HepG2 (cell line): ENCODE measurements at regions of chr1 and their contacts with region 1.

Region 1: DNA sequence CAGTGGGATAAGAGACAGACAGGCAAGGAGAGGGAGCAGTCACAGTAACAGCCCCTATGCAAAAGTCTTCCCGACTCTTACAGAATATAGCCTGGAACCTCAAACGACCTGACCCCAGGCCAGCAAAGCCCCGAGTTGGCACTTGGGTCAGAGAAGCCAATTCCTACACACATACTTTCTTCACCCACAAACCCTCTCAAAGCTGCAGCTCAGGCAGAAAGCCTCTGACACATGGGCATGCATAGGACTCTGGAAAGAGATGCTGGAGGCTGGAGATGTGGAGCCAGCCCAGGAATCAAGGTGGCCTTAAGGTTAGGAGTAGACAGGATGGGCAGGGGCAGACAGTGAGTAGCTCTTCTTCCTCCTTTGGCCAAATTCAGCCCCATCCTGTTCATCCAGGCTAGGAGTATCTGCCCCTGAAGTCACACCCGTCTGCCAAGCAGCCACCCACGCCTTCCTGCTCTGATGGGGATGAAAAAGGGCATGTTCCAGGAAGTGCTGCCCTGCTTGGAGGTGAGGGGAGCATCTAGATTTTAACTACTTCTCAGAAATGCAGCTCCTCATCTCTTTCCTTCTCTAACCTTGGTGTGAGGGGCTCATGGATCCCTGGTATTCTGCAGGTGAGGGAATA is 7.8 kb downstream of the SLC41A1 start:
- DNase-seq: no peak
- ATAC-seq: no peak
- H3K4me3 ChIP-seq: no peak overlapping the region
- H3K27ac ChIP-seq: no peak overlapping the region
- H3K4me1 ChIP-seq: peaks cover 7% of the 10 kb centered on the region
- H3K27me3 ChIP-seq: peaks cover 0 to 4% of the 10 kb centered on the region in 2 experiments; a peak in 2 of 5 replicates
- CTCF ChIP-seq: no peak
- EP300 ChIP-seq: no peak
- POLR2A ChIP-seq: no peak
- RAD21 ChIP-seq: no peak

Region 2: DNA sequence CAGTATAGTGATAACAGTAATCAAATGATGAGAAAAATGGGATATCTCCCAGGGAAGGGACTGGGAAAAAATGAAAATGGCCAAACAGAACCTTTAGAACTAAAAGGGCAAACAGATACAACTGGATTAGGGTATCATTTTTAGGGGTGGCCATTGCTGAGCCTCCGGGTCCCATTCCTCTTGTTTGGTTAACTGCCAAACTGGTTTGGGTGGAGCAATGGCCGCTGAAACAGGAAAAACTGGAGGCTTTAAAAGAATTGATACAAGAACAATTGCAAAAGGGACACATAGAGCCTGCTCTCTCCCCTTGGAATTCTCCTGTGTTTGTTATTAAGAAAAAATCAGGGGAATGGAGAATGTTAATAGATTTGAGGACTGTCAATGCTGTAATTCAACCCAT is 55.4 kb after region 1 on chr1:
- CTCF ChIA-PET with region 1: no interaction called
- POLR2A ChIA-PET with region 1: no interaction called
- in situ Hi-C with region 1: no loop called
- intact Hi-C with region 1: loop called (anchors 10 kb)
- DNase-seq: no peak
- ATAC-seq: no peak
- H3K4me3 ChIP-seq: no peak overlapping the region
- H3K27ac ChIP-seq: no peak overlapping the region
- H3K4me1 ChIP-seq: no peaks in the 10 kb centered on the region
- H3K27me3 ChIP-seq: no peaks in the 10 kb centered on the region
- CTCF ChIP-seq: no peak
- EP300 ChIP-seq: no peak
- POLR2A ChIP-seq: no peak
- RAD21 ChIP-seq: no peak

Region 3: GRCh38 chr1:205961405-205961804 is 156.2 kb after region 1 on chr1:
- CTCF ChIA-PET with region 1: no interaction called
- POLR2A ChIA-PET with region 1: no interaction called
- in situ Hi-C with region 1: no loop called
- intact Hi-C with region 1: no loop called
- DNase-seq: no peak
- ATAC-seq: no peak
- H3K4me3 ChIP-seq: no peak overlapping the region
- H3K27ac ChIP-seq: no peak overlapping the region
- H3K4me1 ChIP-seq: no peaks in the 10 kb centered on the region
- H3K27me3 ChIP-seq: peaks cover 2 to 63% of the 10 kb centered on the region in 2 experiments; a peak in 3 of 5 replicates
- CTCF ChIP-seq: no peak
- EP300 ChIP-seq: no peak
- POLR2A ChIP-seq: no peak
- RAD21 ChIP-seq: no peak